ENCODE measurements at regions of chrX and their contacts with region 1.

Region 1: DNA sequence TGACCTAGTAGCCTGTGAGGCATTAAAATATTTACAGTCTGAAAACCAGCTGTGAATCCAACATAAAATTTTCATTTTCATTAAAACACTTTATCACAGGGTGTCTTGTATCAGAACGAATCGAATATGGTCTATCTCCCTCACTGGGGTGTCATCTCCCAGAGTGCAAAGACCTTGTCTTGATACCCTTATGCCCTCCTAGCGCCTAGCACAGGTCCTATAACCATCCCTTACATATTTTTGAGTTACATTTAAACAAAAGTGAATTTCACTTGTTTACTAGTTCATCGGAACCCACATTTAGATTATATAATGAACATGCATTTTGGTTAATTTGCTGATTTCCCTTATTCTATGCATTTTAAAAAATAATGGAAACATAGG is 14.0 kb downstream of the DIPK2B start:
- DNase-seq: peak; percentile 22
- H3K4me3 ChIP-seq: peak overlapping the region in 1 of 2 experiments; percentile 55; a peak in 1 of 4 replicates
- H3K27ac ChIP-seq: no peak overlapping the region; a peak in 1 of 4 replicates
- H3K4me1 ChIP-seq: no peaks in the 10 kb centered on the region; a peak in 1 of 4 replicates
- H3K27me3 ChIP-seq: no peaks in the 10 kb centered on the region
- CTCF ChIP-seq: no peak
- EP300 ChIP-seq: no peak
- RAD21 ChIP-seq: no peak

Region 2: DNA sequence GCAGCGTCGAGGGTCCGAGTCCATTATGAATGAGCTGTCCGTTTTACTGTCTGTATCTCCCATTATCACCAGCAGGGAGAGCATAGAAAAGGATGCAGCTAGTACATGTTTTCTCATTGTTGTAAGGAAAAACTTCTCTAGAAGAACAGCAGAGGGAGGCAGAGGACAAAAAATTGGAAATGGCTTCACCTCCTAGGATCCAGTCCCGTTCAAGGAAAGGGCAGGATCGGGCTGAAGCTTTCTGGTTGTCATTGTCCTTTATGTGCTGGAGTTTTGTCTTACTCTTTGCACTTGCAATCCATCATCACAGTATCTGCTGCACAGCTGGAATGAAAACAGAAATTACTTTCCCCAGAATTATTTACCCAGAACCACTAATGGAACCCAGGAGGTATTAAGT is 1228.1 kb before region 1 on chrX:
- CTCF ChIA-PET with region 1: interaction called, 24 read pairs
- POLR2A ChIA-PET with region 1: no interaction called
- DNase-seq: peak; percentile 64
- H3K4me3 ChIP-seq: no peak overlapping the region
- H3K27ac ChIP-seq: no peak overlapping the region
- H3K4me1 ChIP-seq: no peaks in the 10 kb centered on the region; a peak in 1 of 4 replicates
- H3K27me3 ChIP-seq: no peaks in the 10 kb centered on the region
- CTCF ChIP-seq: peak; percentile 86
- EP300 ChIP-seq: no peak
- RAD21 ChIP-seq: peak; percentile 94

Region 3: DNA sequence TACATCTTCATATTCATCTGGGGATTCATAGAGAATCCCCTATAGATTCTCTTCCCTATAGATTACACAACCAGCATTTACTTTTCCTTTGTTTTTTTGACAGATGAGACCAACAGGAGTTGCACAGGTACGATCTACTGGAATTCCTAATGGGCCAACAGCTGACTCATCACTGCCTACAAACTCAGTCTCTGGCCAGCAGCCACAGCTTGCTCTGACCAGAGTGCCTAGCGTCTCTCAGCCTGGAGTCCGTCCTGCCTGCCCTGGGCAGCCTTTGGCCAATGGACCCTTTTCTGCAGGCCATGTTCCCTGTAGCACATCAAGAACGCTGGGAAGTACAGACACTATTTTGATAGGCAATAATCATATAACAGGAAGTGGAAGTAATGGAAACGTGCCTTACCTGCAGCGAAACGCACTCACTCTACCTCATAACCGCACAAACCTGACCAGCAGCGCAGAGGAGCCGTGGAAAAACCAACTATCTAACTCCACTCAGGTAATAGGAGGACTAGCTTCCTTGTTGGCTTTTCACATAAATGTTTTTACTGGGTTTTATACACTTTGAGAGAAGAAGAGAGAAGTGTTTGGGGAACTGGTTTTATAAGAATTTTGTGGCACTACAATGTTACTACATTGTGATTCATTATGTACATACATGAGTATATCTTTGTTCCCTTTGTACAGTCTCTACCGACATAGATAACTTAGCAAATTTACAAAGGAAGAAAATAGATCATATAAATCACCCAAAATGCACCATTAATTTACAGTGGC is 123.1 kb before region 1 on chrX:
- CTCF ChIA-PET with region 1: no interaction called
- POLR2A ChIA-PET with region 1: no interaction called
- DNase-seq: no peak
- H3K4me3 ChIP-seq: no peak overlapping the region
- H3K27ac ChIP-seq: no peak overlapping the region
- H3K4me1 ChIP-seq: no peaks in the 10 kb centered on the region
- H3K27me3 ChIP-seq: no peaks in the 10 kb centered on the region
- CTCF ChIP-seq: no peak
- EP300 ChIP-seq: no peak
- RAD21 ChIP-seq: no peak

Region 4: DNA sequence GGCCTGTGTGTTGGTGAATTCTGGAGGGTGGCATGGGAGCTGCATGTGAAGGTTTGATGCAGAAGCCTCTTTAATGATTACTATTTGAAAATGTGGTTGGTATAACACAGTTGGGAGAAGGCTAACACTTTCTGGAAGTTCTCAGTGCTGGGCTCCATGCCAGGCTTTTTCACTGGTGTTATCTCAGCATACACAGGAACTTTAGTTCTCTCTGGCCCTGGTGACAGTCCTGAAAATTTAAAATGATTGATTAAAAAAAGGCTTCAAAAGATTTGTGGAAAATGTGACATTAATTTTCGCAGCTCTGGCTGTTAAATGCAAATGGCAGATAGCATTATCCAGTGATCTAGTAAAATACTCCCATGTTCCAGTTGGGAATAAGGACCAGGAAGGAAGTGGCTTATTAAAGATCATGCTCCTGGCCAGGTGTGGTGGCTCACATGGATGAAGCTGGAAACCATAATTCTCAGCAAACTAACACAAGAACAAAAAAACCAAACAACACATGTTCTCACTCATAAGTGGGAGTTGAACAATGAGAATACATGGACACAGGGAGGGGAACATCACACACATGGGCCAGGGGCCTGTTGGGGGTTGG is 22.5 kb before region 1 on chrX:
- CTCF ChIA-PET with region 1: interaction called, 12 read pairs
- POLR2A ChIA-PET with region 1: no interaction called
- DNase-seq: no peak
- H3K4me3 ChIP-seq: no peak overlapping the region
- H3K27ac ChIP-seq: no peak overlapping the region
- H3K4me1 ChIP-seq: peaks cover 0 to 3% of the 10 kb centered on the region in 2 experiments; a peak in 1 of 4 replicates
- H3K27me3 ChIP-seq: no peaks in the 10 kb centered on the region; the same call in 1 of the 2 replicates
- CTCF ChIP-seq: no peak
- EP300 ChIP-seq: no peak
- RAD21 ChIP-seq: no peak

Region 5: GRCh38 chrX:45172890-45173289 is 13.7 kb before region 1 on chrX:
- CTCF ChIA-PET with region 1: interaction called, 12 read pairs
- POLR2A ChIA-PET with region 1: no interaction called
- DNase-seq: no peak
- H3K4me3 ChIP-seq: no peak overlapping the region
- H3K27ac ChIP-seq: no peak overlapping the region
- H3K4me1 ChIP-seq: no peaks in the 10 kb centered on the region
- H3K27me3 ChIP-seq: peaks cover 6% of the 10 kb centered on the region; the same call in 1 of the 2 replicates
- CTCF ChIP-seq: no peak
- EP300 ChIP-seq: no peak
- RAD21 ChIP-seq: no peak

Region 6: DNA sequence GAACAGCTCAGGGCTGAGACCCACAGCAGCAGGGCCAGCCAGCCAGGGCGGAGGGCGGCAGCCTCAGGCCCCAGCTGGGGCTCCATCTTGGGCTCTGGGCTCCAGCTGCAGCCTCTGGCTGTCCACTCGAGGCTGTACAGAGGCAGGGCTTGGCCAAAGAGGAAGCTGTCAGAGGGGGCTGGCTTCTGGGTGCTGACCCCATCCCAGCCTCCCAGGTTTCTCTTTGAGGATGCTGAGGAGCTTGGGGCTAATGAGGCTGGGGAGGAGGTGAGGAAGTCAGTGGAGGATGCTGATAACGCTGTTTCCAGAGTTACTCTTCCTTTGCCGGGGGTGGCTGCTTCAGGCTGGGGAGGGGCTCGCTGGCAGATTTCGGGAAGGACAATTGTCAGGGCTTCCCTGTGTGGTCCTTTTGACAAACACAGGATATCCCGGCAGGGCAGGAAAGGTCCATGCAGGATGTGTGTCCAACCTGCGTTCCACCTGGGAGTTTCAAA is 14.2 kb after region 1 on chrX and contains the start of gene DIPK2B:
- CTCF ChIA-PET with region 1: interaction called, 22 read pairs
- POLR2A ChIA-PET with region 1: no interaction called
- DNase-seq: no peak
- H3K4me3 ChIP-seq: no peak within 1 kb of the TSS
- H3K27ac ChIP-seq: no peak within 1 kb of the TSS
- H3K4me1 ChIP-seq: no peaks in the 10 kb centered on the region
- H3K27me3 ChIP-seq: peaks cover 11% of the 10 kb centered on the region; the same call in 1 of the 2 replicates
- CTCF ChIP-seq: no peak
- EP300 ChIP-seq: no peak
- RAD21 ChIP-seq: no peak
- polyA plus RNA-seq, gene DIPK2B: 0.02 TPM in 2 replicates

Measured in SK-N-SH (cell line).